WTC11 (cell line): ENCODE measurements at regions of chr12 and their contacts with region 1.

Region 1: DNA sequence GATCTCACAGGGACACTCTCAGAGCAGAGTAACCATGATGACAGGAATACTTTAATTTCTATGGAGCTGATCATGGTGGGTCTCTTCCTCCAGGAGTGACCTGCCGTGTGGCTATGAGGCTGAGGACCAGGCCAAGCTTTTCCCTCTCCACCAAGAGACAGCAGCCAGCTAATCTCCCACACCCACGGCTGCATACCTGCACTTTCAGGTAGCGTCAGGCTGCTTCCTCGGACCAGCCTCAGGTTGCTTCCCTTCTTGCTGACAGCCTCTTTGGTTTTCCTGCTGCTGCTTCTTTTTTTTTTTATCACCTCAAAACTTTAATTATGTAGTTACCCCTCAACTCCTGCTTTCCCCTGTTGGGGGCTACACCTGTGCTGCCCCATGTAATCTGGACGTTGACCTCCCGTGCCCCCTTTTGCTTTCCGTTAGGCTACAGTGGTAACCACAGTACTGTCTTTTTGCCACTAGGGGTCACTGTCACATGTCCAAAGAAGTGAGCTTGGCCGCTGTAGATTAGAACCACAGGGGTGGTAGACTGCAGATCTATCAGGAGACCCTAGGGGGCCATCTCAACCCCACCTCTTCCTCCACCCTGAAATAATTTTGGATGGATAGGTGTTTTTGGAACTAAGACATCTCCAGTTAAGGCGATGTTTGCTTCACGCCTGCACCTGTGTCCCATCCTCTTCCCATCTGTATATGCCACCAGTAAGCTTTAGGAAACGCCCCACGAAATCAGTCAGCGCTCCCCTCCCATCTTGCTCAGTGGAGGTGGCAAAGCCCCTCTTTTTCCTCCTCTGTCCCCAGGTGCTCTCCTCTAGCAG is 7.8 kb upstream of the PIP4K2C start:
- DNase-seq: peak; percentile 76
- ATAC-seq: peak; percentile 99
- H3K4me3 Mint-ChIP-seq: no peak overlapping the region
- H3K27ac Mint-ChIP-seq: no peak overlapping the region
- H3K4me1 Mint-ChIP-seq: no peaks in the 10 kb centered on the region; the same call in 1 of the 2 replicates
- H3K27me3 Mint-ChIP-seq: 0 out of 2 replicates have a peak, but pooled peaks cover 3% of the 10 kb centered on the region
- CTCF ChIP-seq: peak; percentile 92

Region 2: GRCh38 chr12:57604454-57604991 is 21.3 kb after region 1 on chr12 and contains the start of gene DTX3:
- CTCF ChIA-PET with region 1: interaction called, 34 read pairs
- POLR2A ChIA-PET with region 1: no interaction called
- DNase-seq: peak; percentile 52
- ATAC-seq: peak; percentile 23
- H3K4me3 Mint-ChIP-seq: peak within 1 kb of the TSS; percentile 85
- H3K27ac Mint-ChIP-seq: peak within 1 kb of the TSS; percentile 93
- H3K4me1 Mint-ChIP-seq: peaks cover 32% of the 10 kb centered on the region
- H3K27me3 Mint-ChIP-seq: no peaks in the 10 kb centered on the region
- CTCF ChIP-seq: no peak
- total RNA-seq, gene DTX3: 52.4 to 57.0 TPM (median 55.7 TPM) in 3 replicates

Region 3: DNA sequence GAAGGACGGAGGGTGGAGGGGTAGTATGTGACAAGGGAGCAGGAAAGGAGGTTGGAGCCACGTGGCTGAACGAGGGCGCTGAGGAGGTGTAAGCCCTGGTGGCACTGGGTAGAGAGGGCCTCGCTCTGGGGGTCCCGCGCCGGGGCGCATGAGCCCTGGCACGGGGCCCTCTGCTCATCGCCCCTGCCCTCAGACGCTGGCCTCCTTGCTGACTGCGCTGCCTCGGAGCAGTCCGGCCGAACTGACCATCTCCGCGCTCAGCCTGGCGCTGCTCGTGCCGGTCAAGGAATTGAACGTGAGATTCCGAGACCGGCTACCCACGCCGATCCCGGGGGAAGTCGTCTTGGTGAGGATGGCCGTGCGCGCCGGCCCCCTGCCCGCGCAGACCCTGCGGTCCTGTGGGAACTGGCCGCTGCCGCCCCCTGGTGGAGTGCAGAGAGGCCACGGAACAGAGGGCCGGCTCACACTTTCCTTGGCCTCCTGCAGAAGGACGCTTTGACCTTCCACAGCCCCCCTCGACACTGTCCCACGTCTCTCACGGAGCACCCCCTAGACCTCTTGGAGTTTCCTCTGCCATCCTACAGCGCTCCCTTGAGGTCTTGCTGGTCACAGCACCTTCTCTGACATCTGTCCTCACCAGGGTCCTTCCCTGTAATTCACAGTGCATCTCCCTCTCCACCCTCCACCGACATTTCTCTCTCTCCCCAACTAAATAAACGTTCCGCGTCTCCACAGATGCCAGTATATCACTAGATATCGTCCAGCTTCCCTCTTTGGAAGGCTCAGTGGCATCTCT is 38.5 kb after region 1 on chr12:
- CTCF ChIA-PET with region 1: interaction called, 74 read pairs
- POLR2A ChIA-PET with region 1: no interaction called
- DNase-seq: peak; percentile 77
- ATAC-seq: peak; percentile 63
- H3K4me3 Mint-ChIP-seq: peak overlapping the region; percentile 78
- H3K27ac Mint-ChIP-seq: no peak overlapping the region
- H3K4me1 Mint-ChIP-seq: peaks cover 25% of the 10 kb centered on the region
- H3K27me3 Mint-ChIP-seq: peaks cover 100% of the 10 kb centered on the region
- CTCF ChIP-seq: peak; percentile 88

Region 4: DNA sequence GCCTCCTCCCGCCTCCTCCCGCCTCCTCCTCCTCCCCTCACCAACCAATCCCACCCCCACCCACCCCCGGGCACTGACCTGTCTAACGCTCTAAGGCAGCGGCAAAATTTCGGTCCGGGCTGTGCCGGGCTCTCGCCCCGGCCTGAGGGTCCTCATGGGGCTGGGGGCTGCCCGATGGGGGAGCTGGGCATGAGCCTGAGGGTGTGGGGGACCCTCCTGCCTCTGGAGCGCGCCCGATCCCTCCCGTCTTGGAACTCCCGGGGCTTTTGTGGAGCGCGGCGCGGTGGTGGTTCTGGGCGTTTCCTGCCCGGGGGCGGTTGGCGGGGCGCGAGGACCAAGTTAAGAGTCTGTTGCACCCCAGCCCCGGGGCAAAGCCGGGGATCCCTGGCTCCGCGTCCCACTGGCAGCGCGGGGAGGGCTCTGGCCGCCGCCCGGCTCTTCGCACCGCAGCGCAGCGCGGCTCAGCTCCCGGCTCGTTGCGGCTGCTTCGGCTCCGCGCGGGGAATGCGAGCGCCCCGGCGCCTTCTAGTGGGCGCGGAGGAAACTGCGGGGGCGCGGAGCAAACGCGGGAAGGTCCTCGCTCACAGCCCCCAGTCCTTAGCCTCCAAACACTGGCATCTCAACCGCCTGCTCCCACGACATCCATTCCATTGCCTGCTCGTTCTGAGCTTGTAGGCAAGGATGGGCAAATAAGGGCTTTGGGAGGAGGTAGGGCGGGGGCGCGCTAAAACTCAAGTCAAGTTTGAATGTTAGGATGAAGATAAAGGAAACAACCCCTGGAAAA is 49.7 kb after region 1 on chr12 and contains the start of gene B4GALNT1:
- CTCF ChIA-PET with region 1: interaction called, 29 read pairs
- POLR2A ChIA-PET with region 1: no interaction called
- DNase-seq: peak; percentile 77
- ATAC-seq: peak; percentile 85
- H3K4me3 Mint-ChIP-seq: peak within 1 kb of the TSS; percentile 74
- H3K27ac Mint-ChIP-seq: no peak within 1 kb of the TSS
- H3K4me1 Mint-ChIP-seq: peaks cover 15% of the 10 kb centered on the region
- H3K27me3 Mint-ChIP-seq: peaks cover 80% of the 10 kb centered on the region
- CTCF ChIP-seq: peak; percentile 73
- total RNA-seq, gene B4GALNT1: 0.46 to 1.2 TPM (median 1.2 TPM) in 3 replicates

Region 5: GRCh38 chr12:57726151-57726883 is 143.1 kb after region 1 on chr12:
- CTCF ChIA-PET with region 1: interaction called, 19 read pairs
- POLR2A ChIA-PET with region 1: no interaction called
- DNase-seq: peak; percentile 92
- ATAC-seq: peak; percentile 89
- H3K4me3 Mint-ChIP-seq: peak overlapping the region; percentile 94
- H3K27ac Mint-ChIP-seq: no peak overlapping the region
- H3K4me1 Mint-ChIP-seq: peaks cover 15% of the 10 kb centered on the region
- H3K27me3 Mint-ChIP-seq: peaks cover 87% of the 10 kb centered on the region
- CTCF ChIP-seq: peak; percentile 40; the same call in 1 of the 2 replicates